Endothelial cell of umbilical vein (primary cell): ENCODE measurements at regions of chr1 and their contacts with region 1.

Region 1: GRCh38 chr1:26279456-26280332 is at the start of gene SH3BGRL3:
- DNase-seq: peak; percentile 89
- H3K4me3 ChIP-seq: peak within 1 kb of the TSS; percentile 54 to 95 (median 69)
- H3K27ac ChIP-seq: peak within 1 kb of the TSS; percentile 82
- H3K4me1 ChIP-seq: peaks cover 52% of the 10 kb centered on the region
- H3K27me3 ChIP-seq: no peaks in the 10 kb centered on the region
- CTCF ChIP-seq: peak; percentile 50 to 69
- POLR2A ChIP-seq: peak; percentile 97
- total RNA-seq, gene SH3BGRL3: 337 and 344 TPM in 2 replicates

Region 2: DNA sequence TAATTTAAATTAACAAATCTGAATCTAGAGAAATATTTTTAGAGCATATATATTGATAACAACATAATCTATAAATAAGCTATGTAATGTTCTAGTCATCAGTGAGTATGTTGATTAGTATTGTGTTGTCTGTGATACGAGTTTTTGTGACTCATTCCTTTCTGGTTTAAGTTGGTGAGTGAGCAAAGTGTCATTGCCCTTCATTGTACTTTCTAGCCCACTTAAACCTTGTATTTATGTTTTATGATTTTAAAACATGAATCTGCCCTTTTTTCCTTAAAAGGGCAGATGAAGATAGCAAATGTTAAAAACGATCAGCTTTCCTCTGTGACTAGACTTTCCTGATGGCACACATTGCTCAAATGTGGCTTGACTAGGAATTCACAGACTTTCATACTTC is 810.5 kb before region 1 on chr1:
- CTCF ChIA-PET with region 1: no interaction called
- POLR2A ChIA-PET with region 1: no interaction called
- dilution Hi-C with region 1: no loop called
- intact Hi-C with region 1: no loop called
- DNase-seq: peak; percentile 81
- H3K4me3 ChIP-seq: no peak overlapping the region
- H3K27ac ChIP-seq: peak overlapping the region; percentile 64
- H3K4me1 ChIP-seq: peaks cover 18% of the 10 kb centered on the region
- H3K27me3 ChIP-seq: no peaks in the 10 kb centered on the region
- CTCF ChIP-seq: no peak
- POLR2A ChIP-seq: no peak

Region 3: DNA sequence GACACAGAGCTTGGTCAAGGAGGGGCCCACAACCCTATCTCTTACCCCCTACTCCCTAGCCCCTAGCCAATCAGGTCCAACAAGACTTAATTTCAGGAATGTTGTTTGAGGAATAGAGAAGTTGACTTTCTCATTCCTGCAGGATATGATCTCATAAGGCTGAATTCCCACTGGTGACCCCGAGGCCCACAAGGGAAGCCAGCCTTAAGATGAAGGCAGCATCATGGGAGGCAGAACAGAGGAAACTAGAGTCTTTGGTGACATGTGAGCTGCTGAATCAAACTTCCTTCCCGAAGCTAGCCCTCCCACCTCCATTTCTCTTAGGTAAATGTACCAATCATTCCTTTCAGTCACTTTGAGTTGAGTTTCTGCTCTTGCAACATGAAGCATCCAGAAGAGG is 177.2 kb before region 1 on chr1:
- CTCF ChIA-PET with region 1: interaction called, 10 read pairs
- POLR2A ChIA-PET with region 1: no interaction called
- dilution Hi-C with region 1: no loop called
- intact Hi-C with region 1: loop called (anchors 1 kb)
- DNase-seq: peak; percentile 68
- H3K4me3 ChIP-seq: no peak overlapping the region
- H3K27ac ChIP-seq: peak overlapping the region; percentile 62
- H3K4me1 ChIP-seq: peaks cover 30% of the 10 kb centered on the region
- H3K27me3 ChIP-seq: no peaks in the 10 kb centered on the region
- CTCF ChIP-seq: no peak
- POLR2A ChIP-seq: no peak

Region 4: GRCh38 chr1:26233903-26234643 is 45.6 kb before region 1 on chr1 and contains the start of gene CEP85:
- CTCF ChIA-PET with region 1: interaction called, 21 read pairs
- POLR2A ChIA-PET with region 1: no interaction called
- dilution Hi-C with region 1: no loop called
- intact Hi-C with region 1: loop called (anchors 2 kb)
- DNase-seq: peak; percentile 98
- H3K4me3 ChIP-seq: peak within 1 kb of the TSS; percentile 35 to 78 (median 65)
- H3K27ac ChIP-seq: peak within 1 kb of the TSS; percentile 9
- H3K4me1 ChIP-seq: peaks cover 12% of the 10 kb centered on the region
- H3K27me3 ChIP-seq: no peaks in the 10 kb centered on the region
- CTCF ChIP-seq: peak; percentile 87 to 92
- POLR2A ChIP-seq: peak; percentile 81
- total RNA-seq, gene CEP85: 16.2 and 17.8 TPM in 2 replicates

Region 5: DNA sequence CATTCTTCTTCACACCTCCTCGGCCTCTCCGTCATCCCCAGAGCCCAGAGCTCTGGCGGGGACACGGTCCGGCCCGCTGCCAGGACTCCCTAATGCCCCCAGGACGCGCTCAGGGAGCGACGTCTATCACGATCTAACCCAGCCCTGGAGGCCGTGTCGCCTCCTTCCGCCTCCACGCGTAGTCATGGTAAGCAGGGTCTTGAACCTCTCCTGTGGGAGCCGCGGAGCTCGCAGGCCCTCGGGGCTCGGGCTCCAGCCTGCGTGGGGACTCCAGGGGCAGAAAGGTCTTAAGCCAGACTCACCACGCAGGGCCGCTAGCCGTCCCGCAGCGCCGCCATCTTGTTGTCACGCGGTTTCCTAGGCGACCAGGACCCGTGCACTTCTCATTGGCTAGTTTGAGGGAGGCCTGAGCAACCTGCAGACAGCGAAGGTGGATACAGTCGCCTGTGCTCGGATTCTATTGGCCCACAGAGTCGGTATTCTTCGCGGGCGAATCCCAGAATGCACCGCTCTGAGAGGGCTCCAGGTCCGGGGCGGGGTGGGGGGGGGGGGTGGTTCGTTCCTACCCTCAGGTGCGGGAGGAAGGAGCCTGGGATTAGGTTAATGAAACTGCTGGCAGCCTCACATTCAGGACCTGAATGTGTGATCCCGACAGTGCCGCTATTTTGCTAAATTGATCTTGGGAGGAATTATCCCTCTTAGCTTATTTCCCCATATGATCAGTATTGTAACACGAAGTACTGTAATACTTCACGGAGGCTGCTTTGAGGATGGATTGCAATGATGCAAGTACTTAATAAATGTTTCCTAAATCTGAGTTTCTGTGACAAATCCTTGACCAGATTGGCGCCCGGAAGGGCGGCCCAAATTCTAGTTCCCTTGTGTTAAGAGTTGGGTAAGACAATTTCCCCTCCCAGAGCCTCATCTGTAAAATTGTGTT is 26.9 kb after region 1 on chr1 and contains the start of gene UBXN11:
- CTCF ChIA-PET with region 1: interaction called, 18 read pairs
- POLR2A ChIA-PET with region 1: interaction called, 3 read pairs
- dilution Hi-C with region 1: no loop called
- intact Hi-C with region 1: loop called (anchors 1 kb)
- DNase-seq: peak; percentile 95
- H3K4me3 ChIP-seq: peak within 1 kb of the TSS; percentile 11 to 81 (median 62)
- H3K27ac ChIP-seq: peak within 1 kb of the TSS; percentile 9
- H3K4me1 ChIP-seq: peaks cover 10% of the 10 kb centered on the region
- H3K27me3 ChIP-seq: no peaks in the 10 kb centered on the region
- CTCF ChIP-seq: no peak
- POLR2A ChIP-seq: no peak
- total RNA-seq, gene UBXN11: 11.9 and 15.6 TPM in 2 replicates

Region 6: GRCh38 chr1:26321315-26322041 is 41.8 kb after region 1 on chr1:
- CTCF ChIA-PET with region 1: interaction called, 132 read pairs
- POLR2A ChIA-PET with region 1: no interaction called
- dilution Hi-C with region 1: no loop called
- intact Hi-C with region 1: loop called (anchors 1 kb)
- DNase-seq: peak; percentile 81
- H3K4me3 ChIP-seq: no peak overlapping the region
- H3K27ac ChIP-seq: no peak overlapping the region
- H3K4me1 ChIP-seq: no peaks in the 10 kb centered on the region
- H3K27me3 ChIP-seq: no peaks in the 10 kb centered on the region
- CTCF ChIP-seq: peak; percentile 82 to 92
- POLR2A ChIP-seq: no peak

Region 7: DNA sequence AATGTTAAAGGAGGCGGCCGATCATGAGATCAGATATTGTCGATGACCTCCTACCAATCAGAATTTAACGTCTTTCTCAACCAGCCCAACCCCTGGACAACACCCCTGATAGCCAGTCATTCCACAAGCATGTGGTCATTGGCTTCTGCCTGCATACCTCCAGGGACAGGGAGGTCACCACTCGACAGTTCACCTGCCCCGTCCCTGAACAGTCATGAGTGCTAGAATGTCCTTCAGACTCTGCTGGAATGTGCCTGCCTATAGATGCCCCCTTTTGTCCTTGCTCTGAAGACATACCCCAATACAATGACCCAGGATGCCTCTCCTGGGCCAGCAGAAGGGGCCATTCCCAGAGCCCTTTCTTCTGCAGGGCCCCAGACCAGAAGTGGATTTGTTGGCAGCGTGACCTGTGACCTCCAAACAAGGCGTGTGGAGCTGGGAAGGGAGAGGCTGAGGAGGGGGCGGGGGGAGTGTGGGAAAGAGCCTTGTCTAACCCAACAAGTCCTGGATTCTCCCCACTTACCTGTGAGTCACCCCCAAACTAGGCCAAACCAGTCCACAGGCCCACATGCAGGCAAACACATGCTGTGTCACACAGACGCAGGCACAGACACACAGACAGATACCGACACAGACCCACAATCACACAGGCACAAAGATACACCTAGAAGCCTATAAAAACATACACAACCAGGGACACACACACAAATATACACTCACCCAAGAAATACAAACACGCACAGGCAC is 72.1 kb after region 1 on chr1:
- CTCF ChIA-PET with region 1: no interaction called
- POLR2A ChIA-PET with region 1: no interaction called
- dilution Hi-C with region 1: no loop called
- intact Hi-C with region 1: no loop called
- DNase-seq: no peak
- H3K4me3 ChIP-seq: no peak overlapping the region
- H3K27ac ChIP-seq: peak overlapping the region; percentile 51
- H3K4me1 ChIP-seq: peaks cover 15% of the 10 kb centered on the region
- H3K27me3 ChIP-seq: no peaks in the 10 kb centered on the region
- CTCF ChIP-seq: no peak
- POLR2A ChIP-seq: no peak

Region 8: DNA sequence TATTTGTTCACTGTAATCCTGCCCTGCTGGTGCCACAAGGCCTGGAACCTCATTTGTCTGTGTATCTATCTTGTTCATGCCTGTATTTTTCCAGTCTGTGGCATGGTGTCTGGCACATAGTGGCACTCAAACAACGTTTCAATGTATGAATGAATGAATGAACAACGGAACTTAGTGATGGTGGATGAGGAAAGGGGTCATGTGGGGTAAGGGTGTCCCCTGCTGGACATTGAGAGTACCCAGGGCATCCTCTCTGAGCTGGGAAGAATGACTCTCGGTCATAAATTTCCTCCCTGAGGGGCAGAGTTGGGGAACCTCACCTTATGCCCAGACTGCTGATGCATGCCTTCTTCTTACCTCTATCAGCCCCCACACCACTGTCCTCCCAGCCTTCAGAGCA is 111.8 kb after region 1 on chr1:
- CTCF ChIA-PET with region 1: interaction called, 8 read pairs
- POLR2A ChIA-PET with region 1: no interaction called
- dilution Hi-C with region 1: no loop called
- intact Hi-C with region 1: loop called (anchors 1 kb)
- DNase-seq: peak; percentile 29
- H3K4me3 ChIP-seq: no peak overlapping the region
- H3K27ac ChIP-seq: no peak overlapping the region
- H3K4me1 ChIP-seq: no peaks in the 10 kb centered on the region
- H3K27me3 ChIP-seq: peaks cover 0 to 3% of the 10 kb centered on the region in 2 experiments
- CTCF ChIP-seq: peak; percentile 50 to 70
- POLR2A ChIP-seq: no peak